Calu3 (cell line): ENCODE measurements at regions of chr15 and their contacts with region 1.

Region 1: DNA sequence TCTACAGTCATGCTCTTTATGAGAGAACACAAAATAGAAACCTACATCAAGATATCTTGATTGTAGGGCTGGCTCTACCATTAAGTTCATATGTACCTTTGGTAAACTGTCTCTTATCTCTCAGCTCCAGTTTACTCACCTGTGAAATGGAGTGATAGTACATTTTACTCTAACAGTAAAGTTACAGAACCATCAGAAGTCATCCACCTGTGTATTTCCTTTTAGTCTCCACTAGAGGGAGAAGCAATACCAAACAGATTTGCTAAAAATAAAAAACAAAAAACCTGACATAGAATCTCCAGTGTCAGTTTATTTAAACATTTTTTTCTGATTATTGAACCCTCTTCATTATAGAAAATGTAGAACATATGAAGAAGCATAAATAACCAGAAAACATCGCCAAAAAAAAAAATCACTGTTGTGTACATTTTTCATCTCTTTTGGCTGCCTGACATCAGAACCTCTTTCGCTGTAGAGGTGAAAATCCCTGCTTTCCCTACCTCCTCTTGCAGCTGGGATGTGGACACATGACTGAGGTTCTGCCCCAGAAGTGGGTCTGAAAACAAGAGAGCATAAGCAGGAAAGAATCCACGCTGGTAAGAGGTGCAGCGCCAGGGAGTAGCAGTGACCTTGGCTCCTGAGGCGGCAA is 48.7 kb upstream of the WDR72 start:
- DNase-seq: no peak
- H3K4me3 Mint-ChIP-seq: no peak overlapping the region
- H3K27ac Mint-ChIP-seq: no peak overlapping the region
- H3K4me1 Mint-ChIP-seq: peaks cover 20% of the 10 kb centered on the region
- H3K27me3 Mint-ChIP-seq: no peaks in the 10 kb centered on the region
- CTCF ChIP-seq: peak; percentile 24

Region 2: GRCh38 chr15:53910236-53910849 is 102.2 kb after region 1 on chr15:
- CTCF ChIA-PET with region 1: interaction called, 4 read pairs
- intact Hi-C with region 1: loop called (anchors 5 kb)
- DNase-seq: peak; percentile 56
- H3K4me3 Mint-ChIP-seq: peak overlapping the region; percentile 79
- H3K27ac Mint-ChIP-seq: peak overlapping the region; percentile 81
- H3K4me1 Mint-ChIP-seq: peaks cover 13% of the 10 kb centered on the region
- H3K27me3 Mint-ChIP-seq: no peaks in the 10 kb centered on the region
- CTCF ChIP-seq: no peak

Region 3: DNA sequence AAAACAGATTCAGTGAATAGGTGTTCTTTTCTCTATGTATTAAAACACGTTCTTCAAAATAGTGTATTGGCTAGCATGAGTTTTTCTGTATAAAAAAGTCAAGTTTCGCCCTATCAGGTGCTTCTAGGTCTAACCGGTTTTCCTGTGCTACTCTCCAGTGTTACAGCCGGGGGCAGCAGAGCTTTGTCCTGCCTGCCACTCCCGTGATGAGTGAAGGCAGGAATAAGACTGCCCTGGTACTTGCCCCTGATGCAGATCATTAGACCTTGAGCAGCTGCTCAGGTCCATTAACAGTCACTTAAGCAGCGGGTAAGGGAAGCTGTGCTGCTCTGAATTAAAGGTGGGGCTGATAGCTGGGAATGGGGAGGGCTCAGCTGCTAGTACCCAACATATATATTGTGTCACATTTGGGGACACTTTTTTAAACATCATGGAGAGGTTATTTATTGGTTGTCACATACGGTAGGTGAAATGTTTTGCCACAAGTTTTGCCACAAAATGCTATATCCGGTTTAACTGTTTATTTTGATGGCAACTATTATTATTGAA is 168.7 kb after region 1 on chr15:
- CTCF ChIA-PET with region 1: interaction called, 8 read pairs
- intact Hi-C with region 1: loop called (anchors 5 kb)
- DNase-seq: peak; percentile 69
- H3K4me3 Mint-ChIP-seq: no peak overlapping the region
- H3K27ac Mint-ChIP-seq: no peak overlapping the region
- H3K4me1 Mint-ChIP-seq: peaks cover 7% of the 10 kb centered on the region
- H3K27me3 Mint-ChIP-seq: no peaks in the 10 kb centered on the region
- CTCF ChIP-seq: peak; percentile 50

Region 4: DNA sequence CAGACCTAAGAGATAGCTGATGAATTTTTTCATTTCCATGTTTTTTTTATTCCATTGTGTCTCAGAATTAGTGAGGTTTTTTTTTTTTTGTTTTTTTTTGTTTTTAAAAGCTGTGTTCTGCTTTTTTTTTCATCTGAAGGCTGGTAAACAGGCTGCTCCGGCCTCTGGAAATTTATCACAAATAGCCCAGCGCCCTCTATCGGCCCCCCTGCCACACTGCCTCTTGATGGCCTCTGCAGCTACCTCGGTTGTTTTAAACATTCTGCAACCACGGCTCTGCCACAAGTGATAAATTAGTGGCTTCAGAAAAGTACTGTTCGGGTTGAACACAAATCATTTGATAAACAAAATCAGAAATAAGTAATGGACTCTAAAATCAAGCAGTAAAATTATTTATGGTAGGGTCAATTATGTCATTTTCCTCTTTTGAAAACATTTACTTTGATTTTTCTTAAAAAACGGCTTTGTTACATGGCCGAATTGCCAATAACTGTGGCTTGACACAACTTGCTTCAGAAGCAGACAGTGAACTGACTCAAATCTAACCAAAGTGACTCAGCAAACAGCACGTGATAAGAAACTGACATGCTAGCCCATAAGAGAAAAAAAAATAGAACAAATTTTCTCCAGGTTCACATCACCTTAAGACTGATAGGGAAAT is 1300.8 kb after region 1 on chr15:
- CTCF ChIA-PET with region 1: interaction called, 3 read pairs
- intact Hi-C with region 1: loop called (anchors 10 kb)
- DNase-seq: peak; percentile 82
- H3K4me3 Mint-ChIP-seq: no peak overlapping the region
- H3K27ac Mint-ChIP-seq: no peak overlapping the region
- H3K4me1 Mint-ChIP-seq: no peaks in the 10 kb centered on the region
- H3K27me3 Mint-ChIP-seq: peaks cover 10% of the 10 kb centered on the region
- CTCF ChIP-seq: peak; percentile 82